Ovary (tissue), 10 donors: ENCODE measurements at regions of chr4 and their contacts with region 1.

Region 1: DNA sequence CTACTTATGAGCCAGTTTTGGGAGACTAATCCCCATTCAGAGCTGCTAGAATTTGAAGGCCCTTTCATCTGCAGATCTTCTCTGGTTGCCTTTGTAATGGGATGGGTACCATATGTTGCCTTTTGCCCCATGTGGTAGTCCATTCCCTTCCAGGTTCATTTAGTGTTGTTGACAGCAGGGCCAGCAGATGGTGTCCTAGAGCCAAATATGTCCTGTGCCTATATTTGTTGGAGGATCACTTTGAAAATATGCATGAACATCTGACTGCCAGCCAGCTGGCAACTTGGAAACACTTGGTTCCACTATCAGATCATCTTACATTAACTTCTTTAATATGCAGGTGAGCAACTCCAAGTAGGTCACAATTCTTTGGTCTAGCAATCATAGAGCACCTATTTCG is 30.4 kb downstream of the CFAP299 start:
- DNase-seq: peak in 2 of 5 donors; percentile 31 to 46
- H3K4me3 ChIP-seq: no peak overlapping the region
- H3K27ac ChIP-seq: no peak overlapping the region
- H3K4me1 ChIP-seq: no peaks in the 10 kb centered on the region
- H3K27me3 ChIP-seq: no peaks in the 10 kb centered on the region
- CTCF ChIP-seq: peak in 1 of 3 donors; percentile 23
- EP300 ChIP-seq: no peak
- POLR2A ChIP-seq: no peak

Region 2: DNA sequence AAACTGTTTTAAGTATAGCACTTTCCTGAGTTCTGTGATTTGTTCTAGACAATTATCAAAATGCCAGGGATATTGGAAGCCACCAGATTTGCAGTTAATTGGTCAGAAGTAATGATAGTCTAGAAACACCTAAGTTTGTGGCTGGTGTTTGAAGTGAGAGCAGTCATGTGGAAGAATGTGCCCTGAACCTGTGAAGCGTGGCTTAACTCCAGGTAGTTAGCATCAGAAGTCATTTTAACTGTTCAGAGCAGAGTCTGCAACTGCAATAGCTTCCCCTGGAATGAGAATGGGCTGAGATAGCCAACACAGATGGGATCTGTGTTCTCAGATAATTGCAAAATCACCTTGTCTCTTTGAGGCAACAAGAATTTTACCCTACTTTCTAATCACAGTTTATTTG is 702.8 kb before region 1 on chr4:
- intact Hi-C with region 1: no loop called
- DNase-seq: no peak
- H3K4me3 ChIP-seq: no peak overlapping the region
- H3K27ac ChIP-seq: no peak overlapping the region
- H3K4me1 ChIP-seq: no peaks in the 10 kb centered on the region
- H3K27me3 ChIP-seq: no peaks in the 10 kb centered on the region
- CTCF ChIP-seq: no peak
- EP300 ChIP-seq: no peak
- POLR2A ChIP-seq: no peak

Region 3: DNA sequence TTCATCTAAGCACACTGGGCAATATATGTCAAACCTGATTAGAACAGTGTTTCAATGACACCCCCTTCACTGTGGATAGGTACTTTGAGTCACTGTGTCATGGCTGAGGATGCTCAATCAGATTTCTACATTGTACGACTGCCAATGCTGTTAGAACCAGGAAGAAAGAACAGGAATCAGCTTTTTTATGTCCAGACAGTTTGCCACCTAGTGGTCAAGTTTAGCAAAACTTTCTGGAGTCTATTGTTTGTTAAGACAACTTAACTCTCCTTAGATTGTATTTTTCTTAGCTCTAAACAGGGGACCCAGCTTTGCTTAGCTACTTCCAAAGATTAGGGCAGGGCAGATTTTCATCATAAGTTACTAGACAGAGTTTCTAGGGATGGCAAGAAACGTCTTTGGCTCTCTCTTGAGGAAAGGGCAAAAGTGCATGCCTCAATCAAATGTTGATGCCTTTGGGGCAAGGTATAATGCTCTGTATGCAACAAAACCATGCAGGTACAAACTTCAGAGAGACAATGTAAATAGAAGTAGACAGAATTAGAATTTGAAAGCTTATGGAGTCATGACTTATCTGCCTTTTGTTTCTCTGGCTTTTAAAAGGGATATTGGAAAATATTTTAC is 624.1 kb after region 1 on chr4:
- intact Hi-C with region 1: loop called in 2 of 4 experiments (anchors 5 kb)
- DNase-seq: no peak
- H3K4me3 ChIP-seq: no peak overlapping the region
- H3K27ac ChIP-seq: no peak overlapping the region
- H3K4me1 ChIP-seq: no peaks in the 10 kb centered on the region
- H3K27me3 ChIP-seq: no peaks in the 10 kb centered on the region
- CTCF ChIP-seq: peak in 2 of 3 donors; percentile 14 to 41
- EP300 ChIP-seq: no peak
- POLR2A ChIP-seq: no peak

Region 4: GRCh38 chr4:81040012-81040659 is 674.2 kb after region 1 on chr4:
- intact Hi-C with region 1: loop called in 1 of 4 experiments (anchors 10 kb)
- DNase-seq: no peak
- H3K4me3 ChIP-seq: no peak overlapping the region
- H3K27ac ChIP-seq: no peak overlapping the region
- H3K4me1 ChIP-seq: peaks cover 2% of the 10 kb centered on the region
- H3K27me3 ChIP-seq: no peaks in the 10 kb centered on the region
- CTCF ChIP-seq: peak in 2 of 3 donors; percentile 37 to 54
- EP300 ChIP-seq: no peak
- POLR2A ChIP-seq: no peak

Region 5: DNA sequence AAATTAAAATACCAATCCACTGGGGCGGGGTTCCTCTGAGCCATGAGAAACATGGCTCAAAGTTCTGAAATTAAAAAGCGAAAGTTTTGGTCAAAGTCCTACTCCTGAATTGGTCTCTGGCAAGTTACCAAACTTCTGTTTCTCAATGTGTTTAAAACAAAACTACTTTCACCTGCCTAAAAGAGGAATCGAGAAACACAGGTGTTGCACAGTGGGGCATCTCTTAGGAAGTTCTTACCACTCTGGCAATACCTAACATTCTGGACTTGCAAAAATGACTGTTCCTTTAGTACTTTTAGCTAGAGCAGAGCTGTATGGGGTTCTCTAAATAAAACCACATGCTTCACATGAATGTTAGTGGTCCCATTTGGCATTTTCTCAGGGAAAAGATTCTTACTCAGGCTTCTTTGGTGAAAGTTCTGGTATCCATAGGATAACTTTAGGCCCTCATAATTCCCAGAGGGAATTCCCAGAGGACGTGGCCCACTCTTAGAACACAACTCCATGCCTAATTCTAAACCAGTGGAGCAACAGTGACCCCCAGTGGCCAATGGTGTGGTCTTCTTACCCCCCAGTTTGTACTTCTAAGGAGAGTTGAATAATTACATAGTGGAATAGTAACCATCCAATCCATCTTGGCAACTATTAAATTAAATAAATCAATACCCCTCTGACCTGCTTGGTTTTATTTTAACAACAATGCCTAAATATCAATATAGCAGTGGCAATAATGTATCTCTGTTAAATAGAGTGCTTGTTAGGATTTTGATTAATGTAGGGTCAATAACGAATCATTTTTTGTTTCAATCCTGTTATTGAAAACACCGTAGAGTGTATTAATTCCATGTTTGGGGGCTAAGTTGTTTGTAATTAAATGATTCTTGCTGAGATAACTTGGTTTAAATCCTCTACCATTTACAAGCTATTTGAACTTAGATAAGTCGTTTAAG is 686.5 kb after region 1 on chr4:
- intact Hi-C with region 1: loop called in 2 of 4 experiments (anchors 5 to 10 kb)
- DNase-seq: peak; percentile 54 to 81 (median 80)
- H3K4me3 ChIP-seq: no peak overlapping the region
- H3K27ac ChIP-seq: no peak overlapping the region
- H3K4me1 ChIP-seq: peaks cover 8% of the 10 kb centered on the region
- H3K27me3 ChIP-seq: no peaks in the 10 kb centered on the region
- CTCF ChIP-seq: peak in 2 of 3 donors; percentile 46 to 62
- EP300 ChIP-seq: no peak
- POLR2A ChIP-seq: no peak